HepG2 (cell line): ENCODE measurements at regions of chr14 and their contacts with region 1.

Region 1: DNA sequence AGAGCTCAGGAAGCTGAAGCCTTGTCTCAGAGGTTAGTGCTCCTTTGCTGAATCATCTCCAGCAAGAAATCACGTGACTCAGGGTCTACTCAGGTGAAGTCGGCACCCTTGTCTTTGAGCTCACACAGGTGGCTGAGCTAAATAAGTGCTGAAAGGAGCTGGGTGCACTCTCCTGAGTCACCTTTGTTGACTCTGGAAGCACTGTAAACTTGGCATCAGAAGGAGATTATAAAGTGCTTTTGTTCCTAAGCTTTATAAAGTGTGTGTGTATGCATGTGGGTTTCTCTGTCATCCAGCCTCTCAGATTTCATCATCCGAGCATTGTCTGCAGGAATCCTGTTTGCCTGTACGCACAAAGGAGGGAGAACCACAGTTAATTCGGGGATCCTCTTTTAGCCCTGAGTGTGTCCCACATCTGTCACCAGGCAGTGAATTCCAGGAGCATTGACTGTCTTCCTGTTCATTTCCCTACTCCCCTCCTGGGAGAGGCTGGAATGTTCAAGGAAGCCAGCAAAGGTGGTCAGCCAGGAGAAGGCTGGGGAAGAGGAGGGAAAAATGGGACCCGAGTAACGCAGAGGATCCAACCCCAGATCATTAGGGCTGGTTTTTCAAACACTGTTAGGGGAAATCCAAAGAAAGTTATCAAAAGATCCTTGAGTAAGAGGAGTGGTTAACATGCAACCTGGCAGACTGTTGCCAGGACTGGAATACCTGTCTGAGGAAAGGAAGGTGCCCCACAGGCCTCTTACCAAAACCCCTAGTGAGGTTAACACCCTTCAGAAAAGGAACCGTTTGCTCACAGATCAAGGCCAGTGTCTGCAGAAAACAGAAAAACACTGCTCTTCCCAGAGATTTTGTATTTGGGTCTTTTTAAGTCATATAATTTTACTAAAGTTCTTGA is 157.5 kb upstream of the HIF1A start:
- DNase-seq: peak; percentile 97
- ATAC-seq: peak; percentile 87
- H3K4me3 ChIP-seq: peak overlapping the region; percentile 2 to 44 (median 14); a peak in 3 of 6 replicates
- H3K27ac ChIP-seq: peak overlapping the region; percentile 91
- H3K4me1 ChIP-seq: peaks cover 66% of the 10 kb centered on the region
- H3K27me3 ChIP-seq: no peaks in the 10 kb centered on the region
- CTCF ChIP-seq: no peak
- EP300 ChIP-seq: peak; percentile 79 to 98; a peak in 3 of 4 replicates
- POLR2A ChIP-seq: peak in 1 of 2 experiments; percentile 54; a peak in 2 of 4 replicates
- RAD21 ChIP-seq: no peak

Region 2: GRCh38 chr14:61461808-61462275 is 76.0 kb before region 1 on chr14:
- CTCF ChIA-PET with region 1: no interaction called
- POLR2A ChIA-PET with region 1: no interaction called
- in situ Hi-C with region 1: no loop called
- intact Hi-C with region 1: loop called (anchors 2 kb)
- DNase-seq: peak; percentile 68
- ATAC-seq: peak; percentile 79
- H3K4me3 ChIP-seq: no peak overlapping the region
- H3K27ac ChIP-seq: no peak overlapping the region
- H3K4me1 ChIP-seq: peaks cover 39% of the 10 kb centered on the region
- H3K27me3 ChIP-seq: no peaks in the 10 kb centered on the region; a peak in 1 of 5 replicates
- CTCF ChIP-seq: peak; percentile 79
- EP300 ChIP-seq: no peak
- POLR2A ChIP-seq: no peak
- RAD21 ChIP-seq: peak; percentile 81

Region 3: DNA sequence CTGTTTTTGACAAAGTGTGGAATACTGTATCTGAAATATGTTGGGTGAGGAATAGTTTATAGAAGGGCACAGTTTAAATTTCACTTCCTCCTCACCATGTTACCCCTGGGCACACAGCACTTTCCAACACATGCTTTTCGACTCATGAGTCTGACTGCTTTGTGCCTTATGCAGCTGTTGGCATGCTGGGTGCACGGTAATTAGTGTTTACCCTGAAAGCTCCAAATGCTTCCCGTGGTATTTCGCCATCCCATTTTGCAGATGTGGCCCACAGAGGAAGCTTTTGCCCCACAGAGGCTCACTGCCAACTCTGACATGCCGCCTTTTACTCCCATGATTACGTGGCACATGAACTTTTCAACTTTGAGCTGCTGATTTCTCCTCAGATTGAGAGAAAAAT is 47.9 kb before region 1 on chr14:
- CTCF ChIA-PET with region 1: no interaction called
- POLR2A ChIA-PET with region 1: interaction called, 6 read pairs
- in situ Hi-C with region 1: no loop called
- intact Hi-C with region 1: loop called (anchors 1 kb)
- DNase-seq: no peak
- ATAC-seq: no peak
- H3K4me3 ChIP-seq: no peak overlapping the region; a peak in 1 of 6 replicates
- H3K27ac ChIP-seq: no peak overlapping the region
- H3K4me1 ChIP-seq: peaks cover 52% of the 10 kb centered on the region
- H3K27me3 ChIP-seq: no peaks in the 10 kb centered on the region
- CTCF ChIP-seq: no peak
- EP300 ChIP-seq: no peak
- POLR2A ChIP-seq: no peak
- RAD21 ChIP-seq: no peak

Region 4: GRCh38 chr14:61553725-61554641 is 16.2 kb after region 1 on chr14:
- CTCF ChIA-PET with region 1: no interaction called
- POLR2A ChIA-PET with region 1: interaction called, 146 read pairs
- in situ Hi-C with region 1: no loop called
- intact Hi-C with region 1: loop called (anchors 1 kb)
- DNase-seq: peak; percentile 99
- ATAC-seq: peak; percentile 93
- H3K4me3 ChIP-seq: peak overlapping the region in 1 of 3 experiments; percentile 42; a peak in 2 of 6 replicates
- H3K27ac ChIP-seq: peak overlapping the region; percentile 84
- H3K4me1 ChIP-seq: peaks cover 90% of the 10 kb centered on the region
- H3K27me3 ChIP-seq: no peaks in the 10 kb centered on the region
- CTCF ChIP-seq: no peak
- EP300 ChIP-seq: peak; percentile 97 to 99
- POLR2A ChIP-seq: peak in 1 of 2 experiments; percentile 43; a peak in 2 of 4 replicates
- RAD21 ChIP-seq: no peak; the same call in 1 of the 2 replicates

Region 5: GRCh38 chr14:61694830-61695694 is 157.2 kb after region 1 on chr14 and contains the start of gene HIF1A:
- CTCF ChIA-PET with region 1: no interaction called
- POLR2A ChIA-PET with region 1: interaction called, 5 read pairs
- in situ Hi-C with region 1: no loop called
- intact Hi-C with region 1: loop called (anchors 1 kb)
- DNase-seq: peak; percentile 93
- ATAC-seq: peak; percentile 96
- H3K4me3 ChIP-seq: peak within 1 kb of the TSS; percentile 85 to 100 (median 97)
- H3K27ac ChIP-seq: peak within 1 kb of the TSS; percentile 98
- H3K4me1 ChIP-seq: peaks cover 31% of the 10 kb centered on the region
- H3K27me3 ChIP-seq: no peaks in the 10 kb centered on the region; a peak in 1 of 5 replicates
- CTCF ChIP-seq: peak; percentile 36
- EP300 ChIP-seq: peak in 1 of 2 experiments; percentile 37; a peak in 2 of 4 replicates
- POLR2A ChIP-seq: peak; percentile 93 to 97
- RAD21 ChIP-seq: no peak
- total RNA-seq, gene HIF1A: 126 and 211 TPM in 2 replicates

Region 6: DNA sequence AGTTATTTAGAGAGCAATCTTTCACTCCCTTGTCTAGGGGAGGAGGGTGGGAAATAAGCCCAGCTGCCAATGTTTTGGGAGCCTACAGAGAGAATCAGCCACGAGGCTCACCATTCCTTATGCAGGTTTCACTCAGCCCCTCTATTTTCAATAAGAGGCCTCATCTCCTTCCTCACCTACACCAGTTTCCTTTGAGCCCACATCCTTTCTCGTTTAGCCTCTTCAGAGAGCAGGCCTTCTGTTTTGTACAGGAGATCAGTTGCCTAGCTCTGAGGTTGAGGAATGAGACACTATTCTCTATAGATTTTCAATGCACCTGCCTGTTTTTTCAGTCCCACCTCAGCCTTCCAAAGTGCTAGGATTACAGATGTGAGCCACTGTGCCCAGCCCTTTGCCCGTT is 242.3 kb after region 1 on chr14:
- CTCF ChIA-PET with region 1: no interaction called
- POLR2A ChIA-PET with region 1: no interaction called
- in situ Hi-C with region 1: no loop called
- intact Hi-C with region 1: no loop called
- DNase-seq: no peak
- ATAC-seq: no peak
- H3K4me3 ChIP-seq: no peak overlapping the region
- H3K27ac ChIP-seq: no peak overlapping the region
- H3K4me1 ChIP-seq: no peaks in the 10 kb centered on the region
- H3K27me3 ChIP-seq: no peaks in the 10 kb centered on the region
- CTCF ChIP-seq: no peak
- EP300 ChIP-seq: no peak
- POLR2A ChIP-seq: no peak
- RAD21 ChIP-seq: no peak